Sigmoid colon (tissue), 7 donors: ENCODE measurements at regions of chr2 and their contacts with region 1.

Region 1: GRCh38 chr2:6896930-6897759 is 19.6 kb downstream of the RSAD2 start:
- DNase-seq: no peak
- H3K4me3 ChIP-seq: no peak overlapping the region
- H3K27ac ChIP-seq: no peak overlapping the region
- H3K4me1 ChIP-seq: peaks cover 0 to 3% (median 0%) of the 10 kb centered on the region in 4 donors
- H3K27me3 ChIP-seq: no peaks in the 10 kb centered on the region
- CTCF ChIP-seq: peak; percentile 36 to 62 (median 54)
- EP300 ChIP-seq: no peak
- POLR2A ChIP-seq: no peak

Region 2: DNA sequence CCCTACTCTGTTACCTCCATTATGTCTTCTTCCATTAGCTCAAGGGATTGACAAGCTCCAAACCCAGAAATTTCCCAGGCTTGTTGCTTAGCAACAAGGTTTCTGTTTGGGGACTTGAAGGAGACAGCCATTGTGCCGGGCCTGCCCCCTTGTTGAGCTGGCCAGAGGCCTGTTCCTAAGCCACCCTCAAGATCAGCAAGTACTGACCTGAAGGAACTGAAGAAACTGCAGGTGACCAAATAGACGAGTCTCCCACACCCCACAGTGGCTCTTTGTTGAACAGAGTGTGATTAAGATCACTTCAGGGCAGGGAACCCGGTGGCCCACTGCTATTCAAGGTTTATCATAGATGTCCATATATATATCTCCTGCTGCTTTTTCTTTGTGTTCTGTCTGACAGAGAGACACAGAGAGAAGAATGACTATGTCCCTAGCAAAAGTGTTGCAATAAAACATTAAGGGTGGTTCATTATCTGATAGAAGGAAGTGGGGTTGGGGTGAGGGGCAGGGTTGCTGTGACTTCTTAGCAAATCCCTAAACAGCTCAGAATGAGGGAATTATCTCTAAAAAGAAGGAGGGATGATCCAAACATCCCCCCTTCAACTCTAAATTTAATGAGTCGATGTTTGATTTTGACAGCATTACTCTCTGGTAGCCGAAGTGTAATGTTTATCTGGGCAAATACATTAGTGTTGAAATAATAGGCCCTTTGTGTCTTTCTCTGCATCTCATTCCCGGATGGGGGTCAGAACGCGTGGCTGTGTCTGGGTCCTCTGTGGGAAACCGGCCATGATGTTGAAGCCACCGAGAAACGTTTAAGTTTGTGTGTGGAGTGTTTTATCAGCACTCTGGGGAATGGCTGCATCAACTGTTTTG is 89.4 kb after region 1 on chr2:
- intact Hi-C with region 1: no loop called
- DNase-seq: no peak
- H3K4me3 ChIP-seq: no peak overlapping the region
- H3K27ac ChIP-seq: peak overlapping the region in 3 of 4 donors; percentile 0 to 8 (median 6)
- H3K4me1 ChIP-seq: peaks cover 0 to 35% (median 9%) of the 10 kb centered on the region in 4 donors
- H3K27me3 ChIP-seq: no peaks in the 10 kb centered on the region
- CTCF ChIP-seq: no peak
- EP300 ChIP-seq: no peak
- POLR2A ChIP-seq: no peak

Region 3: GRCh38 chr2:7044261-7045250 is 147.4 kb after region 1 on chr2:
- intact Hi-C with region 1: loop called (anchors 2 kb)
- DNase-seq: peak; percentile 85
- H3K4me3 ChIP-seq: no peak overlapping the region
- H3K27ac ChIP-seq: no peak overlapping the region
- H3K4me1 ChIP-seq: peaks cover 0 to 5% (median 2%) of the 10 kb centered on the region in 4 donors
- H3K27me3 ChIP-seq: no peaks in the 10 kb centered on the region
- CTCF ChIP-seq: peak; percentile 45 to 90 (median 86)
- EP300 ChIP-seq: no peak
- POLR2A ChIP-seq: no peak